ENCODE measurements at regions of chr4 and their contacts with region 1.

Region 1: DNA sequence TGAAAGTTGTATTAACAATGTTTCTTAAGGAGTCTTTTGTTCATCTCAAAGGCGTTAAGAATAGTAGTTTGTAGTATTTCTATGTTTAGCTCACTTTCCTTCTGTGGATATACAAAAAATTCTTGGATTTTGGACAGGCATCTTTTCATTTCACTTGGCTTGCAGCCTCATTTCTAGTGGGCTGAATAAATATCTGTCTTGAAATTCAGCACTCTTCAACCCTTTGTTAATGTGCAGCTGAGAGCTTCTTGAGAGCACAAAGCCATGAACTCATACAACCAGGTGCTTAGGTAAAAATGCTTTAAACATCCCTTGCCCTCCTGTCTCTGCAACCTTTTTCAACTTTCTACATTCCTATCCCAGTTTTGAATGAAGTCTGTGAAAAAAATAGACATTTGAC is 1003.2 kb downstream of the C4orf33 start:
- DNase-seq: no peak
- H3K4me3 ChIP-seq: no peak overlapping the region
- H3K27ac ChIP-seq: no peak overlapping the region
- H3K4me1 ChIP-seq: no peaks in the 10 kb centered on the region
- H3K27me3 ChIP-seq: no peaks in the 10 kb centered on the region
- CTCF ChIP-seq: no peak
- POLR2A ChIP-seq: no peak

Region 2: DNA sequence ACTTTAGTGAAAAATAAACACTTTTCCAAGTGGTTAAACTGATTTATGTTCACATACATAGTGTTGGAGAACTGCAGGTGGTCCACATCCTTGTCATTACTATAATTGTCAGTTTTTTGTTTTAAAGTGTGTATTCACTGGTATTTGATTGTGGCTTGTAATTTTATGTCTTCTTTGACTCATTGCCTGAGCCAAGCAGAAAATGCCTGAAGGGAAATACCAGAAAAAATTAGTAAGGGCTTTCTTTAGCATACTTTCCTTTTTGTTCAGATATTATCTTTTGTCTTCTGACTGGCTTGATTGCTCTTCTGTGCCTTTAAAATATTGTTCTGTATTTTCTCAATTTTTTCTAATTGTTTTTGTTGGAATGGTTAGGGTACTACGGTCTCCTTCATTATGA is 21.8 kb before region 1 on chr4:
- intact Hi-C with region 1: no loop called
- DNase-seq: no peak
- H3K4me3 ChIP-seq: no peak overlapping the region
- H3K27ac ChIP-seq: no peak overlapping the region
- H3K4me1 ChIP-seq: no peaks in the 10 kb centered on the region
- H3K27me3 ChIP-seq: no peaks in the 10 kb centered on the region
- CTCF ChIP-seq: no peak
- POLR2A ChIP-seq: no peak

Region 3: DNA sequence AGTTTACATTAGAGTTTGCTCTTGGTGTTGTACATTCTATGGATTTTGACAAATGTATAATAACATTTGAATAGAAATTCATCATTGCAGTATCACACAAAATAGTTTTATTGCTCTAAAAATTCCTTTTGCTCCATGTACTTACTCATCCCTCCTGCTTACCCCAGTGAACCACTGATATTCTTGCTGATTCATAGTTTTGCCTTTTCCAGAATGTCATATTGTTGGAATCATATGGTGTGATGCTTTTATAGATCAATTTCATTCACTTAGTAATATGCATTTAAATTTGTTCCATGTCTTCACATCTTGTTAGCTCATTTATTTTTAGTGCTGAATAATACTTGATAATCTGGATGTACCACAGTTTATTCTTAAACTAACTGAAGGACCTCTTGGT is 590.1 kb after region 1 on chr4:
- intact Hi-C with region 1: loop called (anchors 5 kb)
- DNase-seq: no peak
- H3K4me3 ChIP-seq: no peak overlapping the region
- H3K27ac ChIP-seq: no peak overlapping the region
- H3K4me1 ChIP-seq: no peaks in the 10 kb centered on the region
- H3K27me3 ChIP-seq: no peaks in the 10 kb centered on the region
- CTCF ChIP-seq: no peak
- POLR2A ChIP-seq: no peak

Measured in breast epithelium (tissue), 4 donors.